Naive thymus-derived CD4-positive, alpha-beta T cell (primary cell): ENCODE measurements at regions of chr1 and their contacts with region 1.

Region 1: GRCh38 chr1:119367427-119368124 is 1.0 kb upstream of the HAO2 start:
- DNase-seq: no peak
- ATAC-seq: no peak
- H3K4me3 ChIP-seq: no peak overlapping the region
- H3K4me3 Mint-ChIP-seq: no peak overlapping the region
- H3K27ac ChIP-seq: no peak overlapping the region
- H3K27ac Mint-ChIP-seq: no peak overlapping the region
- H3K4me1 ChIP-seq: no peaks in the 10 kb centered on the region
- H3K4me1 Mint-ChIP-seq: peaks cover 0 to 4% (median 0%) of the 10 kb centered on the region in 7 donors
- H3K27me3 ChIP-seq: no peaks in the 10 kb centered on the region
- H3K27me3 Mint-ChIP-seq: peaks cover 12 to 43% (median 34%) of the 10 kb centered on the region in 5 donors

Region 2: DNA sequence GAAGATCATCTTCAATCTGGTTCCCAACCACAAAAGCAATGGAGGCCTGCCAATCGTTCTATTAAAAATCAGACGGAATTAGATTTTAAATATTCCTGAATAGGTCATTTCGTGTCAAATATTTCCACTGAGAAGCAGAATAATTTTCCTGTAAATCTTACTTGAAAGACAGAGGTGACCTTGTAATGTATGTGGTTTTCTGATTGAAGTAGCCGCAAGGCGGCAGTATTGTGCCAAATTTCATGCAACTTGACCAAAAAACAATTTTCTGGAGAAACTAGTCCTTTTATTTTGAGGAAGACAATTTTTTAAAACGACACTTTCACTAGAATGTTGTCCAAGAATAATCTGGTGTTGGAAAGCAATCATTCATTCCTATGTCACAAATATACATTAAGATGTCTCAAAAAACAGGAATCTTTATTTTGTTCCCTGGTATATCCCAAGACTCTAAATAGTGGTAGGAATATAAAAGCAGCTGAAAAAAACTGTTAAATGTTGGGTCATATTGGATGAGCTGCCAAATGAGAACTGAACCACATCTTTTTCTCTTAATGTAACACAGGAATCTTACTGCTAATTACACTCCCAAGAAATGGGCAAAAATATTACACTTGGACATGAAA is 1216.2 kb before region 1 on chr1:
- CTCF ChIA-PET with region 1: no interaction called
- POLR2A ChIA-PET with region 1: no interaction called
- intact Hi-C with region 1: loop called in 1 of 2 experiments (anchors 5 kb)
- DNase-seq: peak in 1 of 9 donors; percentile 4
- ATAC-seq: no peak
- H3K4me3 ChIP-seq: no peak overlapping the region
- H3K4me3 Mint-ChIP-seq: no peak overlapping the region
- H3K27ac ChIP-seq: no peak overlapping the region
- H3K27ac Mint-ChIP-seq: no peak overlapping the region
- H3K4me1 ChIP-seq: no peaks in the 10 kb centered on the region
- H3K4me1 Mint-ChIP-seq: no peaks in the 10 kb centered on the region
- H3K27me3 ChIP-seq: no peaks in the 10 kb centered on the region
- H3K27me3 Mint-ChIP-seq: peaks cover 0 to 4% (median 0%) of the 10 kb centered on the region in 5 donors

Region 3: GRCh38 chr1:119275145-119276134 is 92.1 kb before region 1 on chr1:
- CTCF ChIA-PET with region 1: no interaction called
- POLR2A ChIA-PET with region 1: no interaction called
- intact Hi-C with region 1: loop called in 1 of 2 experiments (anchors 1 kb)
- DNase-seq: peak in 6 of 9 donors; percentile 21 to 43 (median 24)
- ATAC-seq: peak; percentile 59
- H3K4me3 ChIP-seq: no peak overlapping the region
- H3K4me3 Mint-ChIP-seq: no peak overlapping the region
- H3K27ac ChIP-seq: no peak overlapping the region
- H3K27ac Mint-ChIP-seq: no peak overlapping the region
- H3K4me1 ChIP-seq: no peaks in the 10 kb centered on the region
- H3K4me1 Mint-ChIP-seq: peaks cover 0 to 2% (median 0%) of the 10 kb centered on the region in 7 donors
- H3K27me3 ChIP-seq: no peaks in the 10 kb centered on the region
- H3K27me3 Mint-ChIP-seq: peaks cover 3 to 23% (median 10%) of the 10 kb centered on the region in 5 donors

Region 4: DNA sequence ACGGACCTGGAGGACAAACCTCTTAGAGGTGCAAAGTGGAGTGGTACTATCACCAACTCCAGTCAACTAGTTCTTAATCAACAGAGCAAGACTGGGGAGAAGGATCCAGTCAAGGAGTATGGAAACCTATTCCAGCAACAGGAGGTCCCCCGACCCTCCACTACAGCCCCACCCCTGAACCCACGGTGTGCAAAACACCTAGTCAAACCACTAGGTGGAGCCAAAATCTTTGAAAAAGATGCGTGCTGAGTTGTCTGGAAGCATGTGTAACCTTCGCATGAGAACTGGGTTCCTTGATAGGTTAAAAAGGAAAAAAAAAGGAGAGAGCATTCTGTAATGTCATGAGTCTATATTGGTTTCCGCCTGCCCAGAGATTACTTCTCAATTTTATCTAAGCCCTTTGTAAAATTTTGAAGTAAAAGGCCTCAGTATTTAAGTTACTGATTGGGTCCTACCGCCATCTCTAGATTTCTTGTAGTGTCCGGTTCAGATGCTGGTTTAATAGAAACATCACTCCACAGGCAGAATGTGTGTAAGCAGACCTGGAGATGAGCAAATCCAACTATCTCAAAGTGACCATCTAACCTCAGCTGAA is 80.9 kb before region 1 on chr1:
- CTCF ChIA-PET with region 1: no interaction called
- POLR2A ChIA-PET with region 1: no interaction called
- intact Hi-C with region 1: loop called (anchors 1 kb)
- DNase-seq: peak in 6 of 9 donors; percentile 9 to 30 (median 19)
- ATAC-seq: no peak
- H3K4me3 ChIP-seq: no peak overlapping the region
- H3K4me3 Mint-ChIP-seq: no peak overlapping the region
- H3K27ac ChIP-seq: no peak overlapping the region
- H3K27ac Mint-ChIP-seq: no peak overlapping the region
- H3K4me1 ChIP-seq: no peaks in the 10 kb centered on the region
- H3K4me1 Mint-ChIP-seq: no peaks in the 10 kb centered on the region
- H3K27me3 ChIP-seq: no peaks in the 10 kb centered on the region
- H3K27me3 Mint-ChIP-seq: peaks cover 8 to 34% (median 15%) of the 10 kb centered on the region in 5 donors

Region 5: GRCh38 chr1:119467857-119468668 is 100.5 kb after region 1 on chr1:
- CTCF ChIA-PET with region 1: no interaction called
- POLR2A ChIA-PET with region 1: no interaction called
- intact Hi-C with region 1: no loop called
- DNase-seq: no peak
- ATAC-seq: no peak
- H3K4me3 ChIP-seq: no peak overlapping the region
- H3K4me3 Mint-ChIP-seq: no peak overlapping the region
- H3K27ac ChIP-seq: no peak overlapping the region
- H3K27ac Mint-ChIP-seq: no peak overlapping the region
- H3K4me1 ChIP-seq: no peaks in the 10 kb centered on the region
- H3K4me1 Mint-ChIP-seq: no peaks in the 10 kb centered on the region
- H3K27me3 ChIP-seq: no peaks in the 10 kb centered on the region
- H3K27me3 Mint-ChIP-seq: peaks cover 0 to 12% (median 4%) of the 10 kb centered on the region in 5 donors

Region 6: DNA sequence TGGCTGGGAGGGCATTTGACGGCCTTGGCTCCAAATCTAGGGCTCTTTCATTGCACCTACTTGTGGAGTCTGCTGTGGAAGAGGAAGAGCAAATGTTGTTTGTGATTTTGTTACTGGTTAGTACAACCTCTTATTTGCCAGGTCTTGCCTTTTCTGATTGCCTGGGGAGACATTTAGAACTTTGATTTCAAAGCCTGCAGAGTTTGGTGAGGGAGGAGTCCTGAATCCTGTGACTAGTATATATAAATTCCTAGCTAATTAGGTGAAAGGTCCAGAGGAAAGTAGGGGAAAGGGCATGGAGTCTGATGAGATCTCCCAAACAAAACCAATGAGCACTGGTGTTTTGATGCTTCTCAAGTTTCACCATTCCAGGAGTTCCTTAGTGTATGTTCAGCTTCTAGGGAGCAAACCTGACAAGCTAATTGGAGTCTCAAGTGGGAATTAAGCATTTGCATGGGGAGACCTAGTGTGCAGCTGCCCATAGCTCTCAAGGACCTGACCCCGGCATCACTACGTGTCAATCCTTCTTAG is 406.2 kb after region 1 on chr1:
- CTCF ChIA-PET with region 1: no interaction called
- POLR2A ChIA-PET with region 1: no interaction called
- intact Hi-C with region 1: no loop called
- DNase-seq: no peak
- ATAC-seq: no peak
- H3K4me3 ChIP-seq: no peak overlapping the region
- H3K4me3 Mint-ChIP-seq: no peak overlapping the region
- H3K27ac ChIP-seq: no peak overlapping the region
- H3K27ac Mint-ChIP-seq: no peak overlapping the region
- H3K4me1 ChIP-seq: no peaks in the 10 kb centered on the region
- H3K4me1 Mint-ChIP-seq: no peaks in the 10 kb centered on the region
- H3K27me3 ChIP-seq: no peaks in the 10 kb centered on the region
- H3K27me3 Mint-ChIP-seq: peaks cover 0 to 21% (median 9%) of the 10 kb centered on the region in 5 donors